ENCODE measurements at regions of chr2 and their contacts with region 1.

Region 1: DNA sequence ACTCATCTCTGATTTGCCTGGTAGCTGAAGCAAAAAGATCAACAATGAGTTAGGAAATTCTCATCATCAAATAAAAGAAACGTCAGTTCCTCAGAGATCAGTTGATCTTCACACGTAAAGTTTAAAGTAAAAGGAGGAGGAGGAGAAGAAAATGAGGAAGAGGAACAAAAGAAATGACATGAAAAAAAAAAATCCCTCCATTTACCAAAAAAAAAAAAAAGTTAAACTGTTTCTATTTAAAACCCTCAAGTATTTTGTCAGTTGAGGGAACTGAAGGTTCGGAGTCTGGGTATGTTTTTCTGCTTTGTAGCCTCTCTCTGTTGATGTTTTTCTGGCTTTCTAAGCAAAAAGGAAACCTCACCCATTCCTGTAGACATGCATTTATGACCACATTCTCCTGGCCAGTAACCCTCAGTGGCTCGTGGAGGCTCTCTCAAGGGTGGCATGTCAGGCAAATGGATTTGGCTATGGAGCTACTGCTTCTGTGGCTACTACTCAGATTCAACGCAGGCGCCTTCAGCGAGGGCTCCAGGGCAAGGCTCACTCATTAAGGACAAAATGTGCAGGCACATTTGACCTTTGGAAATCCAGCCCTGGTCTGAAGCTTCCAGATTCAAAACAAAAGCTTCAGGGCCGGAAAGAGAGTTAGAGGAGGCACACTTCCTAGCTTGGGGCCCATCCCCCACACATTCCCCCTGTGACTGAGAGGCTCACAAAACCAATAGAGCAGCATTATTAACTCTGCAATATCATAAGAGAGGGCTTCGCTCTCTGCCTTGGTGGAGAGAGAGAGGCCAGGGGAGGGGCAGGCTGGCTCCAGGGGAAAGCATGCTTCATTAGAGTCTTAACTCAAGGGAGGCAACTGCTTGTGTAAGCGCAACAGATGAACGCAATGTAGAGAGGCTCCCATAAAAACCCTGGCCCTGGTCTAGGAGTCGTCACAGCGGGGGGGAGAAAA is 22.3 kb downstream of the KLF7 start:
- DNase-seq: peak; percentile 75
- H3K4me3 Mint-ChIP-seq: peak overlapping the region; percentile 63
- H3K27ac Mint-ChIP-seq: peak overlapping the region; percentile 98
- H3K4me1 Mint-ChIP-seq: peaks cover 64% of the 10 kb centered on the region
- H3K27me3 Mint-ChIP-seq: no peaks in the 10 kb centered on the region

Region 2: GRCh38 chr2:206800506-206801417 is 342.7 kb before region 1 on chr2:
- CTCF ChIA-PET with region 1: interaction called, 11 read pairs
- POLR2A ChIA-PET with region 1: no interaction called
- DNase-seq: peak; percentile 60
- H3K4me3 Mint-ChIP-seq: peak overlapping the region; percentile 51
- H3K27ac Mint-ChIP-seq: peak overlapping the region; percentile 46
- H3K4me1 Mint-ChIP-seq: peaks cover 18% of the 10 kb centered on the region
- H3K27me3 Mint-ChIP-seq: no peaks in the 10 kb centered on the region

Region 3: GRCh38 chr2:206937555-206937954 is 205.9 kb before region 1 on chr2:
- CTCF ChIA-PET with region 1: no interaction called
- POLR2A ChIA-PET with region 1: no interaction called
- DNase-seq: no peak
- H3K4me3 Mint-ChIP-seq: no peak overlapping the region
- H3K27ac Mint-ChIP-seq: no peak overlapping the region
- H3K4me1 Mint-ChIP-seq: no peaks in the 10 kb centered on the region
- H3K27me3 Mint-ChIP-seq: peaks cover 1% of the 10 kb centered on the region

Region 4: DNA sequence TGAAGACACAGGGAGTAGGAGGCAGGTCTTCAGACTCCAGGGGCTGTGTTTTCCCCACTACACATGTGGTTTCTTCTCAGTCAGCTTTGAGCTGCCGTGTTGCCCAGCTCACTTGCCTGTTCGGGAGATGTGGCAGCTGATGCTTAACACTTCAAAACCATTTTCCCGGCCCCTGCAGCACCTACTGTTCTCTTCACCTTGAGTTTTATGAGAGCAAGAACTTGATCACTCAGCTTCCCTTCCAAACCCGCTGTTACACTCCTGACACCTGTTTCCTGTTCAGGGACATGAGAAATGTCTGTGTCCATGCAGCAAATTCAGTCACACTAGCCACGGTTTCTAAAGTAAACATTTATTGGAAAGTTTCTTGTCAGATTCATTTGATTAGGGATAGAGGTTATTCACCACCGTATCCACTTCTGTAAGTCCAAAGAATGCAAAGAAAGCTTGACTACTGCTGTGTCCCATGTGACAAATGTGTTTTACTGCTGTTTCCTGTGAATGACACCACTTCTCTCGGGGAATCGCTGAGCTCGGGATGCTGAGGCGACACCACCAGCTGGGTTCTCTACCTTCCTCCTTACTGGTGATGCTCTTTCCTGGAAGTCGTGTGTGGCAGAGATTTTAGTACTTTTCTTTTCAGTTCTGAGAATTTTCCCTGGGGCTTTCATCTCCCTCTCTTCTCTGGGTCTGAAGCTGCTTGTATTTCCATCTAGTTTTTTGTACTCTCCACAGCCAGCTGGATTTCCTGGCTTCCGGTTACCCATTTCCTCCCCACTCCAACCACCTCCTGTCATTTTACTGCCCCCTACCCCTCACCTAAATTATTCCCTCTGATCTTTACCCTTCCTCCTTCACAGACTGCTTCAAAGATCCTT is 69.5 kb before region 1 on chr2:
- CTCF ChIA-PET with region 1: interaction called, 5 read pairs
- POLR2A ChIA-PET with region 1: interaction called, 23 read pairs
- DNase-seq: peak; percentile 63
- H3K4me3 Mint-ChIP-seq: peak overlapping the region; percentile 15
- H3K27ac Mint-ChIP-seq: peak overlapping the region; percentile 65
- H3K4me1 Mint-ChIP-seq: peaks cover 32% of the 10 kb centered on the region
- H3K27me3 Mint-ChIP-seq: peaks cover 10% of the 10 kb centered on the region

Region 5: DNA sequence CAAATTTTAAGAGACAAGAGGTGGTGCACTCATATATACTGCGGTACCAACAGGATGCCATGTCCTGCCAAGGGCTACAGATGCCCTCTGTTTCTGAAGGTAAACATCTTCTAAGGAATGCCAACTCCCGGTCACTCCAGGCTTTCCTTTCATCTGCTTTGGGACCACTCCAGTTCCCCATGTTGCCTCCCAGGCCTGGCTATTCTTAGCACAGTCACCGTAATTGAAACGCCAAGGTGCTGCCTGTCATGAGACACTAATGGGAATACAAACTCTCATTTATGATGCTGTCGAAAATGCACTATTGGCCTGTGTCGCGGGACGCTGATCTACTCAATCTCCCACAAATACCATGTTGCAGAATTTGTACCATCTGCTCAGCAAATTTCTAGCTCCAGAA is 57.4 kb before region 1 on chr2:
- CTCF ChIA-PET with region 1: no interaction called
- POLR2A ChIA-PET with region 1: no interaction called
- DNase-seq: no peak
- H3K4me3 Mint-ChIP-seq: no peak overlapping the region
- H3K27ac Mint-ChIP-seq: no peak overlapping the region
- H3K4me1 Mint-ChIP-seq: peaks cover 21% of the 10 kb centered on the region
- H3K27me3 Mint-ChIP-seq: no peaks in the 10 kb centered on the region

Region 6: DNA sequence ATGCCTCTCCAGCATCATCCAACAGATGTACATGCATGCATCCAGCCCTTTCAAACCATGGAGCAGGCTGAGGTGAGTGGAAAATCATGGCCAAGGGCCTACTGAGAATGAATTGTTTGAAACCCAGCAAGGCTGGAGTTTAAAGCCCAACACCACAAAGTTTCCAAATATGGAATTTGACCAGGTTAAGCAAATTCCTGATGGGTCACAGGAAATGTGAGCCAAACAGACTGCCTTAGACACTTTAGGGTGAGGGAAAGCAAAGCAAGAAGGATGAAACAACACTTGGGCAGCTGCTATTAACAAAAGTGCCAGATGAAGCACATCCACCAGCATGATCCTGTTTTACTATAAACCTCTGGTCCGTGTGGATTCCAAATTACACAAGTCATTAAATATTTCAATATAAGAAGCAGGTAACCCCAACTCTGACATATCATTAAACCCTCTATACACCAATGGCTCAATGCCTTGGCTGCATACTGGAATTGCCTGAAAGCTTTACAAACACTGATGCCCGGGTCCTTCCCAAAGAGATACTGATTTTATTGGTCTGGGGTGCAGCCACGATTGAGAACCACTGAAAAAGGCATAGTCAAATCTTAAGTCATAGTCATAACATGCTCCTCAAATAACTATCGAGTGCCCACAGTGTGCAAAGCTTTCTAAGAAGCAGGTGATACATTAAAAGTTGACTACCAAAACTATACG is 13.1 kb after region 1 on chr2:
- CTCF ChIA-PET with region 1: interaction called, 34 read pairs
- POLR2A ChIA-PET with region 1: interaction called, 276 read pairs
- DNase-seq: peak; percentile 34
- H3K4me3 Mint-ChIP-seq: no peak overlapping the region
- H3K27ac Mint-ChIP-seq: peak overlapping the region; percentile 12
- H3K4me1 Mint-ChIP-seq: peaks cover 85% of the 10 kb centered on the region
- H3K27me3 Mint-ChIP-seq: no peaks in the 10 kb centered on the region

Region 7: DNA sequence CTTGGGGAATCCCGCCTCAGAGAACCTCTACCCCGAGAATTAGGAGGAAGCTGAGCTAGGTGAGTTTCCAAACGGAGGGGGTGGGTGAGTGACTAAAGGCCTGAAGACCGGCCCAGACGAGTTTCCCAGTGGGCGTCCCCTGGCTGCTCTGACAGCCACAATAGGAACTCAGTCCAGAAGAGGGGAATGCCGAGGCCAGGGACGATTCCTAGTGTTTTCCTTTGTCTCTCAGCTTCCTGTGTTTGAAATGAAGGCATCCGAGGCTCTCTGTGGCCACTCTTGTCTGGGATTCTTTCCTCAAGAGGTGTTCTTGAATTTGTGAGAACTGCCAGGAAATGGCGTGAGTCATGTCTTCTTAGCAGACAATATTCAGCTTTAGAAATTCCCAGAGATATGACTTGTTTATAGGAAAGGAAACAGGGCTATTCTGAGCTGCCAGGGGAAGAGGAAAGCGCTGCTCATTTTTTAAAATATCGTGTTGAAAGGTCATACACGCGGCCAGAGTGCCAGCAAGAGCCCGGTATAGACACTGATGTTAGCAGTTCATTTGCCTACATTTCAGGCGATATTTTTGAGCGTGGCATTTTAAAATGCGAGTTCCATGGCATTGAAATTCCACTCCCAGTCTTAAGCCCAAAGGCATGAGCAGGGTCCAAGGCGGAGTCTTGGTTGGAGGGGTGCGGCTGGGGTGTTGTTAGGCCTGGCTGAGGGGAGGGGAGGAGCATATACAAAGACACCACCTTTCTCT is 191.3 kb after region 1 on chr2:
- CTCF ChIA-PET with region 1: interaction called, 3 read pairs
- POLR2A ChIA-PET with region 1: interaction called, 36 read pairs
- DNase-seq: peak; percentile 45
- H3K4me3 Mint-ChIP-seq: peak overlapping the region; percentile 68
- H3K27ac Mint-ChIP-seq: peak overlapping the region; percentile 87
- H3K4me1 Mint-ChIP-seq: peaks cover 79% of the 10 kb centered on the region
- H3K27me3 Mint-ChIP-seq: no peaks in the 10 kb centered on the region

Region 8: DNA sequence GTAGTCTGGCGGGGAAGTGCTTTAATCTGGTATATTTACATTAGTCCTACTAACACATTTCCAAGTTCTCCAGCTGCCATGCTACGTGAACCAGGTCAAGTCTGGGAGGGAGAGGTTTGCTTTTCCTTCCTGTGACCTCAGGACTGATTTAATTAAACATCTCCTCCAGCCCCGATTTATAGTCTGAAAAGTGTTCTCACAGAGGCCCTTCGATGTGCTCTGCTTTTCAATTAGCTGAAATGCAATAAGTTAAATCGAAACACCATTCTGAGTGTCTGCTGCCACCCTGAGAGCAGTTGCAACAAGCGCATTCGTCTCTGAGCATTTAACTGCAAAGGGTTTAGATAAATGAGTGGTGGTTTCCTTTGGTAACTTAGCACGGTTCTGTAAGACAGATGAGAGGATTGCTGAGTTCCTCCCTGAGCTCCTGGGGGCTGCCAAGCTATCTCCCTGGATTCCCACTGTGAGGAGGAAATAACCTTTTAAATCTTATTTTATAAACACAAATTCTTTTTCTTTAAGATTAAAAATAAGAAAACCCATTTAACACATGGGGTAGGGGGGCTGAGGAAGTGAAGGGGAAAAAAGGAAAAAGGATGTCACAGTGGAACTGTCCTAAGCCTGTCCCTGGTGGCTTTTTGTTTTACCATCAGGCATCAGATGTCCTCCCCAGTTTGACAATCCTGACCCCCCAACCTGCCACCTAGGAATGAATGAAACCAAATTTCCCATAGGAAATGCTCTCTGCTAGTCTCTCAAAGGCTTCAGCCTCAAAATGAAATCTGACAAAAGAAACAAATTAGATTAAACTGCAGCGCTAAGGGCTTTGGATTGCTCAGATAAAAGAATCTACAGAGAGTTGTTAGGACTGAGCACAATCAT is 329.8 kb after region 1 on chr2:
- CTCF ChIA-PET with region 1: interaction called, 16 read pairs
- POLR2A ChIA-PET with region 1: interaction called, 8 read pairs
- DNase-seq: peak; percentile 63
- H3K4me3 Mint-ChIP-seq: no peak overlapping the region
- H3K27ac Mint-ChIP-seq: no peak overlapping the region
- H3K4me1 Mint-ChIP-seq: peaks cover 22% of the 10 kb centered on the region
- H3K27me3 Mint-ChIP-seq: peaks cover 3% of the 10 kb centered on the region

Measured in activated CD4-positive, alpha-beta memory T cell treated with anti-CD3 and anti-CD28 coated beads, Interleukin-2, amount 10 ng/mL, durations not matched to agents 7 days and 5 days (primary cell).